Left cardiac atrium (tissue), 4 donors: ENCODE measurements at regions of chr12 and their contacts with region 1.

Region 1: DNA sequence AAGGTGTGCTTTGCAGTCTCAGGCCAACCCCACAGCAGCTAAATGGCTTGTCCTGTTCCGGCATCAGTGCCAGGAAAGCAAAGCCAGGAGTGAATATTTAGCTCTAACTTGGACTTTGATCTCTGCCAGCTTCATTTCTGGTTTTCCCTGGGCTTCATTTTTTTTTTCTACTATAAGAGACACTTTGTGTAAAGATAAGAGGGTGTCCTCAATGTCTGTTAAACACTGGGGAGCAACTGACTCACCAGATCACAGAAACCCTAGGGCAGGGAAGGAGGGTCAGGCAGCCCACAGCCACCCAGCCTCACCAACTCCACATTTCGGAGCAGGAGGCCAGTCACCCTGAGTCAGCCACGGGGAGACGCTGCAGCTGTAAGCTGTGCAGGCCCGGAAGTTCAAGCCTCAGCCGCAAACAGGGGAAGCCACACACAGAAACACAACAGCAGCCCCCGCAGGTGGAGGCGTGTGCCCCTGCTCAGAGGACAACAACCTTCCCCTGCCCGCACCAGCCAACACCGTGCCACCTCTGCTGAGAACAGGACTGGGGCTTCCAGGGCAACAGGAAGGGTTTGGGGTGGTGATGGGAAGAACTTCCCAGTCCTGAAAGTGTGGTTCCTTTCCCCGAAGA is 6.3 kb downstream of the TNFRSF1A start:
- DNase-seq: peak; percentile 87
- ATAC-seq: peak; percentile 36 to 51

Region 2: GRCh38 chr12:6383572-6384498 is 48.3 kb after region 1 on chr12 and contains the start of gene LTBR:
- intact Hi-C with region 1: loop called in 1 of 2 experiments (anchors 2 kb)
- DNase-seq: peak; percentile 98
- ATAC-seq: peak; percentile 97
- total RNA-seq, gene LTBR: 40.4 to 66.6 TPM

Region 3: DNA sequence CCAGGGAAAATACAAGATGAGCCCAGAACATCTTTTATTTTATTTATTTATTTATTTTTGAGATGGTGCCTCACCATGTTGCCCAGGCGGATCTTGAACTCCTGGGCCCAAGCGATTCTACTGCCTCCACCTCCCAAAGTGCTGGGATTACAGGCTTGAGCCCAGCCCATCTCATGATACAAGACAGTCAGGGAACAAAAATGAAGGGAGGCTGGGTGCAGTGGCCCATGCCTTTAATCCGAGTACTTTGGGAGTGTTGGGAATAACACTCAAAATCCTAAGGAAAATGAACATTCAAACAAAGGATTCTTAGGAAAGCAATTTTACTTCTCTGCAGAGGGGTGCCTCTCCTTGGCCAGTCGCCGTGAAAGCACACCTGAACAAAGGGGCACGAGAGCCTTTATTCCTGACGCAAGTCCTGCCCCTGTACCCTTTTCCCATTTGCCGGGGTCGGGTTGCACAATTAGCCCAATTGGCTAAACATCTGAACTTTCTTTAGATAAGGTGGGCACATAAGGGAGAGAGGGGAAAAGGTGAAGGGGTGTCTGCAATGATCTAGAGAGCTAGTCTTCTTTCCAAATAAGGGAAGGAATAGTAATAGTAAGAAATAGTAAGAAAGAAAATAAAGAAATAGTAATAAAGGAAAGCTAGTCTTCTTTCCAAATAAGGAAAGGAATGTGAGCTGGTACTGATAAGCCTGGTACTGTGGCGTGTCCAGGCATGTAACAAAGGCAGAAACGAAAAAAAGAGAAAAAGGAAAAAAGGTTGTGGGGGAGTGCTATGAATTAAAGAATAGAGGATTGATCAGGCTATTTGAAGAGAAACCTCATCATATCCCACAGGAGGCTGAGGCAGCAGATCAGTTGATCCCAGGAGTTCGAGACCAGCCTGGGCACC is 171.8 kb after region 1 on chr12:
- intact Hi-C with region 1: no loop called
- DNase-seq: no peak
- ATAC-seq: peak in 1 of 2 donors; percentile 36